ENCODE measurements at regions of chr1 and their contacts with region 1.

Region 1: DNA sequence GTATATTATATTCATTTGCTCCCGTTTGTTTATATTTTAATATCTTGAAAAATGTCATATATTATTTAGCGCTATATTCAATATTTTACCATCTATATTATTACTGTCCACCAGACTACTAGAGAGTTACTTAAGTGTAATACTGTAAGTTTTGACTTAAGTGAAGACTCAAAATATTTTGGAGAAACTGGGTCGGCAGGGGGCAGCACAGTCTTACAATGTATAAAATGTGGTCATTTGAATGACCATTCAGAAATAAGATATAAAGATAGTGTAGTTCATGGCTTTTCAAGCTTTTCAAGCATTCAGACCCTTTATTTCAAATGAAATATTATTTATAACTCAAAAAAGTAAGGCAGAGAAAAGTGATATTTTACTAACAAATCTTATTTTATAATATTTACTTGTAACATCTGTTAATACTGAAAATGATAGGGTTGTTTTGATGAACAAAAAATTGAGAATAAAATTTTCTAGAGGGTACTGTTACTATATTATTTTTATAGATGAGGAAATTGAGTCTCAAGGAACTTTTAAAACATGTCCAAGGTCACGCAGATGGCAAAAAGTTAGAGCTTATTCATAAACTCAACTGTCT is 89.0 kb upstream of the SERTAD4 start:
- DNase-seq: peak; percentile 80
- ATAC-seq: no peak
- H3K4me3 Mint-ChIP-seq: no peak overlapping the region
- H3K27ac Mint-ChIP-seq: no peak overlapping the region
- H3K4me1 Mint-ChIP-seq: no peaks in the 10 kb centered on the region
- H3K27me3 Mint-ChIP-seq: peaks cover 27% of the 10 kb centered on the region

Region 2: GRCh38 chr1:210185063-210185462 is 41.5 kb after region 1 on chr1:
- CTCF ChIA-PET with region 1: no interaction called
- POLR2A ChIA-PET with region 1: no interaction called
- intact Hi-C with region 1: no loop called
- DNase-seq: no peak
- ATAC-seq: no peak
- H3K4me3 Mint-ChIP-seq: no peak overlapping the region
- H3K27ac Mint-ChIP-seq: no peak overlapping the region
- H3K4me1 Mint-ChIP-seq: no peaks in the 10 kb centered on the region
- H3K27me3 Mint-ChIP-seq: peaks cover 2% of the 10 kb centered on the region

Region 3: DNA sequence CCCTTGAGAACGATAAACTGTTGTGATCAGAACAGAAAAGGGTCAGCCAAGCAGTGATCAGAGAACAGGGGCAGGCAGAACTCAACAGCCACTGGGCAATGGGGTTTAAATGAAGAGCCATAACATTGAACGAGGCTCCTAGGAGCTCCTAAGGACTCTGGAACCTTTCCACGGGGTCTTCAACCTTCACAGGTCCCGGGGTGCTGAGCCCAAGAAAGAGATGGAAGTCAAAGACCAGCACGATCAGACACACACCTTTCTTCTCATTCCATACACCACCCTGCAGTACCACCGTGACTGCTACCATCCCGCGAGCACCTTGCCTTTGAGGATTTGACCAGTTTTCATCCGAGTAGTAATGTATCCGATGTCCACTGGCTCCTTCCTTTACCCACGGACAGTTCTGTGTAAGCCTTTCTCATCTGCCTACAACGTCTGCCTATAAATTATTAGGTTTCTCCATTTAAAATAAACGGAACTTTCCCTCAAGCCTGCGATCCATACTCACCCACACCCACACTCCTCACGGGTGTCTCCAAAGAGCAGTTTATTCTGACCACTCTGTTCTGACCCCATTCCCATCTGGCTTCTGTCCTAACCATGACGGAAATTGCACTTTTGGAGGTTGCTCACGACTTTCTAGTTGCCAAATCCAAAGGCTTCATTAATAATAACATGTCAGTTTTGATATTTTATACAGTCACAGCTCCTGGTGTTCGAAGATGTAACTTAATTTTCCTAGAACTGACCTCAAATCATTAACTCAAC is 168.3 kb after region 1 on chr1:
- CTCF ChIA-PET with region 1: interaction called, 14 read pairs
- POLR2A ChIA-PET with region 1: no interaction called
- intact Hi-C with region 1: loop called (anchors 1 kb)
- DNase-seq: no peak
- ATAC-seq: no peak
- H3K4me3 Mint-ChIP-seq: peak overlapping the region; percentile 68
- H3K27ac Mint-ChIP-seq: peak overlapping the region; percentile 10
- H3K4me1 Mint-ChIP-seq: peaks cover 6% of the 10 kb centered on the region
- H3K27me3 Mint-ChIP-seq: peaks cover 17% of the 10 kb centered on the region

Measured in activated CD4-positive, alpha-beta T cell treated with anti-CD3 and anti-CD28 coated beads for 36 hours (primary cell).